Posterior vena cava (tissue), 2 donors: ENCODE measurements at regions of chr11 and their contacts with region 1.

Region 1: GRCh38 chr11:17077520-17078401 is at the start of gene RPS13:
- DNase-seq: peak; percentile 99
- total RNA-seq, gene RPS13: 772 to 813 TPM

Region 2: GRCh38 chr11:15871904-15872653 is 1205.7 kb before region 1 on chr11:
- intact Hi-C with region 1: loop called in 1 of 2 experiments (anchors 10 kb)
- DNase-seq: no peak